OCI-LY7 (cell line): ENCODE measurements at regions of chr5 and their contacts with region 1.

Region 1: GRCh38 chr5:72955768-72956323 is at the start of gene FCHO2:
- DNase-seq: peak; percentile 95
- H3K4me3 ChIP-seq: peak within 1 kb of the TSS; percentile 77
- H3K27ac ChIP-seq: no peak within 1 kb of the TSS
- H3K4me1 ChIP-seq: peaks cover 18% of the 10 kb centered on the region
- CTCF ChIP-seq: peak; percentile 83
- total RNA-seq, gene FCHO2: 3.4 and 7.8 TPM in 2 replicates

Region 2: GRCh38 chr5:71749681-71750080 is 1206.2 kb before region 1 on chr5:
- CTCF ChIA-PET with region 1: no interaction called
- POLR2A ChIA-PET with region 1: interaction called, 13 read pairs
- intact Hi-C with region 1: no loop called
- DNase-seq: no peak
- H3K4me3 ChIP-seq: no peak overlapping the region
- H3K27ac ChIP-seq: no peak overlapping the region
- H3K4me1 ChIP-seq: no peaks in the 10 kb centered on the region
- CTCF ChIP-seq: no peak

Region 3: DNA sequence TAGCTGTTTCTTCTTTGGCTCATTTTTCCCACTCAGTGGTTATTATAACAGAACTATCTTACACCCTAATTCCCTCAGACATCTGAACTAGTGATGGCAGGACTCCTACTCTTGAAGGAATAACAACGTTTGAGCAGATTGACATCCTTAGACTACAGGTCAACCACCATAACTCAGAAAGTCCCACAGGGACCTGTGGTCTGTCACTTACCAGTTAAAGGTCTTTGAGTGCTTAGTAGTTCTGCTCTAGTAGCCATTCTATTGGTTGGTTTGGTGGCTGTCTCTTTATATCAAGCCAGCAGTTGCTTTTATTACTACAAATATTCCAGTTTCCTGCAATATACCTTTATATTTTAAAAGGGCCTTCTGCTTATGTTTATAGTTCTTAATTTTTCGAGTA is 67.3 kb before region 1 on chr5:
- CTCF ChIA-PET with region 1: no interaction called
- POLR2A ChIA-PET with region 1: no interaction called
- intact Hi-C with region 1: no loop called
- DNase-seq: no peak
- H3K4me3 ChIP-seq: no peak overlapping the region
- H3K27ac ChIP-seq: no peak overlapping the region
- H3K4me1 ChIP-seq: no peaks in the 10 kb centered on the region
- CTCF ChIP-seq: no peak